ENCODE measurements at regions of chr12 and their contacts with region 1.

Region 1: GRCh38 chr12:117470804-117471203 is 109.4 kb upstream of the NOS1 start:
- DNase-seq: no peak
- H3K4me3 ChIP-seq: no peak overlapping the region
- H3K27ac ChIP-seq: no peak overlapping the region
- H3K4me1 ChIP-seq: no peaks in the 10 kb centered on the region
- H3K27me3 ChIP-seq: peaks cover 16% of the 10 kb centered on the region
- CTCF ChIP-seq: peak; percentile 51

Region 2: DNA sequence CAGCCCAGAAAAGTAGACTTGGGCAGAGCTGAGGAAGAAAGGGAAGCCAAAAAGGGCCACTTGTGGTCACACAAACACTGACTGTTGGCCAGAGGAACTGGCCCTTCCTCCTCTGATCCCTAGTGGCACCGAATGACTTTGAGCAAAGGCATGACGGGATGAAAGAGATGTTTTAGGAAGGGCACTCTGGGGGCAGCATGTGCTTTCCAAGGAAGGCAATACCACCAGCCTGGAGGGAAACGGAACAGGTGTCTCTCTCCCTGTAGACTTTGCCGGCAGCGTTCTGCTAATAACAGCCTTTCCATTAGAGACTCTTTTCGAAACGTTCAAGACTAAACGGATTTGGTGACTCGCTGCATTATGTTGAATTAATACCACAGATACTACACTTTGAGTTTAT is 268.2 kb before region 1 on chr12:
- CTCF ChIA-PET with region 1: no interaction called
- POLR2A ChIA-PET with region 1: interaction called, 23 read pairs
- intact Hi-C with region 1: no loop called
- DNase-seq: no peak
- H3K4me3 ChIP-seq: no peak overlapping the region
- H3K27ac ChIP-seq: no peak overlapping the region
- H3K4me1 ChIP-seq: no peaks in the 10 kb centered on the region
- H3K27me3 ChIP-seq: no peaks in the 10 kb centered on the region
- CTCF ChIP-seq: no peak

Region 3: DNA sequence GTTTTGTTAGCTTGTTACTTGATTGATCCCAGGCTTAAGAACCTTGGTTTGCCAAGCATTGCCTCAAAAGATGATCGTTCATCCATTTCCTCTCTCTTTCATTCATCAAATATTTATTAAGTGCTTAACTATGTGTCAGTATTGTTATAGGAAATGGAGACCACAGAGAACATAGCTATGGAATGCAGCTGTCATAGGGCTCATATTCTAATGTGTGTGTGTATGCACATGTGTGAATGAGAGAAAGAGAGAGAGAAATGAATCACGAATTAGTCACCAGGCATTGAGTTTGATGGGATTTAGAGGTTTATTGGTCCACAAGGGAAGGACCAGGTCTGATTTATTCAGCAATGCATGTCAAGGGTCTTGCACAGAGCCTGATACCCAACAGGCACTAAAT is 209.6 kb before region 1 on chr12:
- CTCF ChIA-PET with region 1: no interaction called
- POLR2A ChIA-PET with region 1: interaction called, 11 read pairs
- intact Hi-C with region 1: no loop called
- DNase-seq: peak; percentile 80
- H3K4me3 ChIP-seq: no peak overlapping the region
- H3K27ac ChIP-seq: no peak overlapping the region
- H3K4me1 ChIP-seq: no peaks in the 10 kb centered on the region
- H3K27me3 ChIP-seq: no peaks in the 10 kb centered on the region
- CTCF ChIP-seq: no peak

Measured in A673 (cell line).